ENCODE measurements at regions of chr19 and their contacts with region 1.

Region 1: DNA sequence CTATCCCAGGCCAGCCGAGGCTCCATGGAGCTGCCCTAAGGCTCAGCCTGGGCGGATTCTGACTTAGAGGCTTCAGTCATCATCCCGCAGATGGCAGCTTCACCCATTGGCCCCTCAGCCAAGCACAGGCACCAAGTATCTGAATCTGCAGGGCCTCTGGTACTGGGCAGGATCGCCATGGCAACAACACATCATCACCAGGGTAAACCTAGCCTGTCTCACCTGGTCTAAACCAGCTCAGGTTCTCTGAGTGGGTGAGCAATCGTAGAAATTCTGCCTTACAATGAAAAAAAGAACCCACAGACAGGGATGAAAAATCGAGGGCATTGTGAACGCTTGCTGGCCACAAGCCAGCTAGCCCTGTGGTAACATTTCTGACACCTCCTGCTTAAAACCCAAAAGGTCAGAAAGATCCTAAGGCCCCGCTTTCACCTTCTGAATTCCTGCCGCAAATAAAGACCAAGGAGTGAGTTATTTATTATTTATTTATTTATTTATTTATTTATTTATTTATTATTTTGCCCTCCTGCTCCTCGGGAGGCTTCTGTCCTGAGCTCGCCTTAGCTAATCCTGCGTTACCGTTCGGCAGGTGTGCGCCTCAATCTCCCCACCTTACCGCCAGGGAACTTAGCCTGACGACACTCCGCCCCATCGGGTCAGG is 12.0 kb upstream of the CEACAM21 start:
- DNase-seq: no peak
- ATAC-seq: no peak
- H3K4me3 ChIP-seq: no peak overlapping the region
- H3K27ac ChIP-seq: no peak overlapping the region
- H3K4me1 ChIP-seq: no peaks in the 10 kb centered on the region
- H3K27me3 ChIP-seq: peaks cover 0 to 31% (median 0%) of the 10 kb centered on the region in 3 donors
- CTCF ChIP-seq: no peak

Region 2: GRCh38 chr19:41521931-41522555 is 41.9 kb before region 1 on chr19:
- intact Hi-C with region 1: no loop called
- DNase-seq: peak in 1 of 2 donors; percentile 61
- ATAC-seq: no peak
- H3K4me3 ChIP-seq: peak overlapping the region; percentile 55
- H3K27ac ChIP-seq: peak overlapping the region; percentile 44
- H3K4me1 ChIP-seq: no peaks in the 10 kb centered on the region
- H3K27me3 ChIP-seq: peaks cover 3 to 72% (median 14%) of the 10 kb centered on the region in 3 donors
- CTCF ChIP-seq: no peak

Region 3: DNA sequence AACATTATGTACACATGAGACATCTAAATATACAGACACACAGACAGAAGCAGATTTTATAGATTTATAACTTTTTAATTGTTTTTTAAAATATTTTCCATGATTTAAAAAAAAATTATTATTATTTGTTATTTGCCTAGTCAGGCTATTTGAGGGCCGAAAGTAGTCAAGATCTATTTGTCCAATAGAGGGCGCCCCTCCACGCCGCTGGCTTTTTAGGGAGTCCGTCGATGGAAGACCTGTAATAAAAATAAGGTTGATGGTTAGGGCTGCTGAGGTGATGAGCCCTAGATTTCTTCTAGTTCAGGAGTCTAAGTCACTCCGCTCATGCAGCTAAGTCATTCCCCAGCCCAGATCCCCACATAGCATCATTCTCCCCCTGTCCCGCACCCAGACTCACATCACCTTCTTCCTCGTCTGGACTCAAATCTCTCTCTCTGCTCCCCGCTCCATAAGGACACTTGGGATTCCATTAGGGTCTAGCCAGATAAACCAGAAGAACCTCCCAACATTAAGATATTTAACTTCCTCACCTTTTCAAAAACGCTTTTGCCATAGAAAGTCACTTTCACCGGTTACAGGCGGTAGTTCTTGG is 21.9 kb before region 1 on chr19:
- intact Hi-C with region 1: loop called in 1 of 2 experiments (anchors 2 kb)
- DNase-seq: peak in 1 of 2 donors; percentile 47
- ATAC-seq: no peak
- H3K4me3 ChIP-seq: no peak overlapping the region
- H3K27ac ChIP-seq: no peak overlapping the region
- H3K4me1 ChIP-seq: no peaks in the 10 kb centered on the region
- H3K27me3 ChIP-seq: peaks cover 0 to 5% (median 0%) of the 10 kb centered on the region in 3 donors
- CTCF ChIP-seq: peak; percentile 44